ENCODE measurements at regions of chr2 and their contacts with region 1.

Region 1: DNA sequence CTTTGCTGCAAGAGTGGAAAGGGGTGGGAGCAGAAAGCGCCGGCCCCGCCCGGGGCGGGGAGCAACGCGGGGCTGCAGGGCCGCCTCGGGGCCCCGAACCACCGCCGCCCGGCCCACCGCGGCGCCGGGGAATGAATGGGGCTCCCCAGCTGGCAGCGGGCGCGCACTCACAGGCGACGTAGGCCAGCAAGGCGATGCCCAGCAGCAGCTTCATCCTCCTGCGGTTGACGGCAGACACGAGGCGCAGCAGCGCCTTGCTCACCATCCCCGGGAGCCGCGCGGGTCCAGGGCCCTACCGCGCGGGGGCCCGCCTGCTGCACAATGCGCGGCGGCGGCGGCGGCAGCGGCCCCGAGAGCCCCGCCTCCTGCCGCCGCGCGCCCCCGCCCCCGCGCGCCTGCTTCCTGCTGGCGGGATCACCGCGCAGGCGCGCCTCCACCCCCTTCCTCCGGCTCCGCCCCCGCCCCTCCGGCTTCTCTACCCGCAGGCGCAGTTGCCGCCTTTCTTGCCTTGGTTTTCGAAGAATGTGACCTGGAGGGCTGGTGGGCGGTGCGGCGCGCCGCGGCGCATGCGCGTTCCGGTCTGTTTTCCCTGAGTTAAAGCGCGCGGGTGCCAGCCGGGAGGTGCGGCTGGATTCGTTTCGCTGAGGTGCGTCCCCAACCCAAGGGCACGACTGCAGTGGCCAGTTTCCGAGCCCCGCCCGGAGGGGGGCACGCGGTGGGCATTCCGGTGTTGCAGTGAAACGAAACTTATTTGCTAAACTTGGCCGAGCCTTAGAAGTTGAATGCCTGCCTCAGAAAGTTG is at the start of gene UXS1:
- DNase-seq: peak; percentile 96 to 98
- ATAC-seq: peak; percentile 93 to 96
- H3K4me3 ChIP-seq: peak within 1 kb of the TSS; percentile 78 to 96 (median 87)
- H3K27ac ChIP-seq: peak within 1 kb of the TSS; percentile 84 to 91 (median 88)
- H3K4me1 ChIP-seq: peaks cover 15 to 17% of the 10 kb centered on the region in 2 donors
- H3K27me3 ChIP-seq: no peaks in the 10 kb centered on the region
- CTCF ChIP-seq: no peak
- POLR2A ChIP-seq: peak; percentile 63 to 85
- total RNA-seq, gene UXS1: 8.0 to 46.9 (median 18.4) TPM

Region 2: DNA sequence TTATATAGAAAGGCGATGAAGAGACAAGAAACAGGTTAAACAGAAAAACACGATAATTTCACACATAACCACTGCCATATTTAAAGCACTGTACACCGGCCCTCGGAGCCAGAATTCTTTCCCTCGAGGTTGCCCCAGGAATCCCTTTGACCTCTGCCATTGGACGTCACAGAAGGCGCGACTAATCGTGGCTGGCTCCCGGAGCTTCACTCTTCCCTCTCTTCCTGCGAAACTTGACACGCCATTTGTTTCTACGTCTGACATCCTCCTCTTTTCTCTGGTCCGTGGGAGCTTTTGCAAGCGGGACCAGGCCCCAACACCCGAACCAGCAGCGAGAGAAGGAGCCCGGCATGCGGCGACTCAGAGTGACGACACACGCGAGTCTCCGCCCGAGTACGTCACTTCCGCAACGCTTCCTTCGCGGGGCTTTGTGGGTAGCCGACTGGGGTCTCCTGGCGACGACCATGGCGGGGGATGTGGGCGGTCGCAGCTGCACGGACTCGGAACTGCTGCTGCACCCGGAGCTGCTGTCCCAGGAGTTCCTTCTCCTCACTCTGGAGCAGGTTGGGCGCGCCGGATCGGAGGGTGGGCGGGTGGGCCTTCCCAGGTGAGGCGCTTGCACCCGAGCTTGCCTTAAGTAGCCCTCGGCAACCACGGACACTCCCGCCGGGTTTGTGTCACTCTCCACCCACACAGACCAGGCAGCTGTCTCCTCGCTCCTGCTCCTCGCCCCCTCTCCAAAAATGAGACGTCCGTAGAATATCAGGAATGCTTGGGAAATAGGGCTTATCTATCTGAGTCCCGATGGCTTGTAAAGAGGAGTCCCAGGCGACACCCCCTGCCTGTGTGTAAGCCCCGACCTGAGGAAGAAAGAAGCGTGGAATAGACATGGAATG is 856.8 kb before region 1 on chr2 and contains the start of gene C2orf49:
- in situ Hi-C with region 1: no loop called
- intact Hi-C with region 1: loop called (anchors 10 kb)
- DNase-seq: peak; percentile 74 to 81
- ATAC-seq: peak; percentile 98
- H3K4me3 ChIP-seq: peak within 1 kb of the TSS; percentile 90 to 99 (median 94)
- H3K27ac ChIP-seq: peak within 1 kb of the TSS; percentile 92 to 98 (median 94)
- H3K4me1 ChIP-seq: peaks cover 20 to 25% of the 10 kb centered on the region in 2 donors
- H3K27me3 ChIP-seq: no peaks in the 10 kb centered on the region
- CTCF ChIP-seq: peak in 2 of 5 experiments; percentile 25 to 48
- POLR2A ChIP-seq: no peak
- total RNA-seq, gene C2orf49: 12.8 to 26.7 (median 18.6) TPM

Region 3: DNA sequence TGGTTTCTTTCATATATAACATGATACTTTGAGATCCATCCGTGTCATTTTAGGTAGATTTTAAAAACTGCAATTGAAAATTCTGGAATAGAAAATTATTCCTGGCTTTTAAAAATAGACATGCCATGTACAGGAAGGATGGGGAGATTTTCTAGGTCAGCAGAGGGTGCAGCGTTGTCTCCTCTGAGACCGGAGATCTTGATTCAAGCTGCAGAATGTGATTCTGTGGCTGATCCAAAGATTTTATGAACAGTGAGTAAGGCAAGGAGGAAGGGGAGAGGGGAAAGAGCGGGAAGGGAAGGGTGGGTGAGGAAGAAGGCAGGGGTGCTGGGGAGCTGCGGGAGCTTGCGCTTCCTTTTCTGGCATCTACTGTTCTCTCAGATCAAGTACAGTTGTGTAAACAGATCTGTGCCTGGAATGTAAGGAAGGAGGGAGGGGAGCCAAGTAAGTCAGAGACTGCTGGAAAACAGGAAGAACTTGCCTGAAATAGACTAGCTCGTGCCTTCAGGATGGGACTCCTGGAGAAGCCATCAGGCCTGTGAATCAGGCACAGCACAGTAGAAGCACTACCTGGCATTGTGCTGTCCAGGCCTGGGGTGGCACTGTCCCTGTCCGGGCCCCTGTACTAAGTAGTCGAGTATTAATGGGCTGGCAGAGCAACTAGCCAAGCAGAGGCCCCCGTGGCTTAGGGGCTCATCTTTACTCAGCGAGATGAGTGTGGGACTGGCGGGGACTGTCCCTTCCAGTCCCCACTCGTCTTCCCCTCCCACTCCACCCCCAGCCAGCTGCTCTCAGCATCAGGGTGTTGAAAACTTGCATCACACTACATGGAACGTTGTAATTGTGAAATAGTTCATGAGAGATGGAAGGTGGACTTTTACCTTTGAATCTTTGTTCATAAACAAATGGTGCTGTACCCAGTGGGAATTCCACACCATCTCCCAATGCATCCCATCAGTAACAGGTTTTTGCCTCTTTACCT is 163.6 kb before region 1 on chr2:
- in situ Hi-C with region 1: no loop called
- intact Hi-C with region 1: loop called (anchors 5 kb)
- DNase-seq: peak; percentile 54 to 71
- ATAC-seq: peak; percentile 91 to 96
- H3K4me3 ChIP-seq: peak overlapping the region in 3 of 4 donors; percentile 1 to 26 (median 22)
- H3K27ac ChIP-seq: peak overlapping the region; percentile 72 to 83 (median 78)
- H3K4me1 ChIP-seq: peaks cover 18 to 33% of the 10 kb centered on the region in 2 donors
- H3K27me3 ChIP-seq: no peaks in the 10 kb centered on the region
- CTCF ChIP-seq: no peak
- POLR2A ChIP-seq: no peak

Region 4: GRCh38 chr2:106115250-106115649 is 78.9 kb before region 1 on chr2:
- in situ Hi-C with region 1: no loop called
- intact Hi-C with region 1: loop called (anchors 5 kb)
- DNase-seq: peak; percentile 27 to 29
- ATAC-seq: peak; percentile 51 to 58
- H3K4me3 ChIP-seq: no peak overlapping the region
- H3K27ac ChIP-seq: peak overlapping the region in 3 of 4 donors; percentile 84 to 98 (median 95)
- H3K4me1 ChIP-seq: peaks cover 27 to 34% of the 10 kb centered on the region in 2 donors
- H3K27me3 ChIP-seq: no peaks in the 10 kb centered on the region
- CTCF ChIP-seq: no peak
- POLR2A ChIP-seq: no peak

Measured in gastrocnemius medialis (tissue), 4 donors.